ENCODE measurements at regions of chr10 and their contacts with region 1.

Region 1: GRCh38 chr10:77641788-77642397 is 4.3 kb upstream of the KCNMA1 start:
- DNase-seq: peak; percentile 80

Region 2: GRCh38 chr10:77173615-77174461 is 468.1 kb before region 1 on chr10:
- in situ Hi-C with region 1: loop called (anchors 25 kb)
- DNase-seq: peak; percentile 75

Region 3: GRCh38 chr10:77603534-77603927 is 38.4 kb before region 1 on chr10:
- in situ Hi-C with region 1: no loop called
- DNase-seq: no peak